Right ventricle myocardium inferior (tissue), 1 donor: ENCODE measurements at regions of chr19 and their contacts with region 1.

Region 1: GRCh38 chr19:11798391-11799330 is at the start of gene ZNF491:
- DNase-seq: peak; percentile 94
- ATAC-seq: peak; percentile 99
- total RNA-seq, gene ZNF491: 2.8 TPM

Region 2: DNA sequence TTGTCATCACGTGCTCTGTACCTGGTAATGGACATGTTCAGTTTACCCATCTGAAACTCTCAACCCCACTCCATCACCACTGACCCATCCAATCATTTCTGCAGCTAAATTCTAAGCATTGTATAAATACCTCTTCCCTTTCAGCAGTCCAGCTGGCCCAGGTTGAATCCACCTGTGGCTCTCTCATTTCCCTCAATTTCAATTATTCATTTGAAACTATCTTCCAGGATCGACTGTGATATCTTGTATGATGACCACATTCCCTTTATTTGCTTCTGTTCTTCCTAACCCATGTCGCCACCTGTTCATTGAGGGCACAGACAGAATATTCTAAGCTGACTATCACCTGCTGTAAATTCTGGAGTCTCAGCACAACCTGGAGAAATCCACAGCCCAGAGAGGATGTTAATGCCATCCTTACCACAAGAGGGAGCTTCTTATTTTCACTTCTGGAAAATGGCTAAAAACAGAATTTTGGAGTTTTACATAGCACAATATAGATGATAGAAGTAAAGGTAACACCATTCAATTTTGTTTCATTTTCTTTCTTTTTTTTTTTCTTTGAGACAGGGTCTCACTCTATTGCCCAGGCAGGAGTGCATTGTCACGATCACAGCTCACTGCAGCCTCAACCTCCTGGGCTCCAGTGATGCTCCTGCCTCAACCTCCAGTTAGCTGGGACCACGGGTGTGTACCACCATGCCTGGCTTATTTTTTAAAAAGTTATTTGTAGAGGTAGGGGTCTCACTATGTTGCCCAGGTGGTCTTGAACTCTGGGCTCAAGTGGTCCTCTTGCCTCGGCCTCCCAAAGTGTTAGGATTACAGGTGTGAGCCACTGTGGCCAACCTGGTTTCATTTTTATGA is 98.5 kb before region 1 on chr19:
- intact Hi-C with region 1: no loop called
- DNase-seq: no peak
- ATAC-seq: no peak

Region 3: DNA sequence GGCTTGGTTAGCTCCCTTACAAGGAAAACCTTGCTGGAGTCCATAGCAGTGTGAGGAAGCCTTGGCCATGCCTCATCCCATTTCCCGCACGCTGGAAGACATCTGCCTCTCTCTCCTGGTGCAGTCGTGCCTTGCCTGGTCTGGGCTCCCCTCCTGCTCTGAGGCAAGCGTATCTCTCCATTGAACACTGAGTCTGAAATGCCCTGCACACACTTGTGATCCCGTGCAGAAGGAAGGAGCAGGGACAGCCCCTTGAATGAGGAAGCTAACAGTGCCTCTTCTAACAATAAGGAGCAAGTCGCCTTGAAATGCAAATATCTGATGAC is 15.0 kb after region 1 on chr19:
- intact Hi-C with region 1: loop called (anchors 2 kb)
- DNase-seq: no peak
- ATAC-seq: peak; percentile 32

Region 4: DNA sequence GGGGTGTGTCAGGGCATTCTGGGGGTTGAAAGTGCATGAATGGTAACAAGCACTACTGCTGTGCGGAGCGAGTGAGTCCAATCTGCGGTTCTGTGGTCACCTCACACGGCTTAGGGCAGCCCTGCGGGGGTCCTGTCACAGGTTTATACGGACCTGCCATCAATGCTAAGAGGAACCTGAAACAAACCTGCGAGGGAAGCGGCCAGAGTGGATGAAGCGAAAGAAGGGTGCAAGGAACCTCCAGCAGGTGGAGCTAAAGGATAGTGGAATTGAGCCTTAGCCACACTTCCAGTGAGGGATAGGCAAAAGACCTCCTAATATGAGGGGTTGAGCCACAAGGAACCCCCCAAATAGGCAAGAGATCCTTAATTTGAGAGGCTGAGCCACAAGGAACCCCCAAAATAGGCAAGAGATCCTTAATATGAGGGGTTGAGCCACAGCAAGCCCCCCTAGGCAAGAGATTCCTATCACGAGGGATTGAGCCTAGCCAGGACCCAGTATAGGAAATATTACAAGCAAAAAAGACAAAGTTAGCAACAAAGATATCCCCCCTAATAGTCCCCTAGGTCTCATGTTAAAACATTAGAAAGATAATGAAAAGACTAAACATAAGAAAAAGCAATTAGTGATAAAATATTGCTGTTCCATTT is 82.6 kb after region 1 on chr19:
- intact Hi-C with region 1: loop called (anchors 5 kb)
- DNase-seq: no peak
- ATAC-seq: peak; percentile 67

Region 5: DNA sequence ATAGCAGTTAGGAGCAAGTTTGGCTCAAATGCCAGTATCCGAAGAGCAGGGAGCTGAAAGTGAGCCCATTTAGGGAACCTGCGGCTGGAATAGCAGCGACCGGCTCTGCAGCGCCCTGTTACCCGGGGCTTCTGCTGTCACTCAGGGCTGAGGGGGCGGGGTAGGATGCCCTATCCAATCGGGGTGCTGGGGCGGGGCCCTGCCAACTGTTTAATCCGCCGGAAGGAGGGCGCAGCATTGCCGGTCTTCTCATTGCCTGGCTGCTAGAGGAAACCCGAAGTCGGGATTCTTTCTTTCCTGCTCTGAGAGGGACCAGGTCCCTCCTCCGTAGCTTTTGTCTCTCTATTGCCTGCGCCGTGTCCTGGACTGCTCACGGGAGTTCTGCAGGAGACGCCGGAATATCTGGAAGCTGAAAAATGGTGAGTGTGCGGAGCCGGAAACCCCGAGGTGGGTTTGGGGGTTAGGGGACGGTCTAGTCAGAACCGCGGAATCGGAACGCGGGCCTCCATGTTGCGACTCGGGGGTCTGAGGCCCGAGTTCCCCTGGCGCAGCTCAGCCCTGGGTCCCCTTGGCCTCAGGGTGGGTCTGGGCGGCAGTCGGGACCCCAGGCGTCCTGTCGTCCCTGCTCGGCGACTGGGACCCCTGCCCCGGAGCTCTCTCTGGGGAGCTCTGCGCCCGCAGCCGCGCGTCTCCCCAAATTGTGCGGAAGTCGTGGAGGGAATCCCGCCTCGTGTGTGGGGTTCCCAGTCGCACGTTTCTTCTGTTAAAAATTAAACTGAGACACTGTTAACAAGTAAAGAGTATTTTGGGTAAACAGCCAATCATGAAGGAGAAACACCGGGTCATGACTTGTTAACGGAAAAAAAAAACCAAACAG is 189.0 kb after region 1 on chr19:
- intact Hi-C with region 1: loop called (anchors 1 kb)
- DNase-seq: peak; percentile 98
- ATAC-seq: peak; percentile 99

Region 6: DNA sequence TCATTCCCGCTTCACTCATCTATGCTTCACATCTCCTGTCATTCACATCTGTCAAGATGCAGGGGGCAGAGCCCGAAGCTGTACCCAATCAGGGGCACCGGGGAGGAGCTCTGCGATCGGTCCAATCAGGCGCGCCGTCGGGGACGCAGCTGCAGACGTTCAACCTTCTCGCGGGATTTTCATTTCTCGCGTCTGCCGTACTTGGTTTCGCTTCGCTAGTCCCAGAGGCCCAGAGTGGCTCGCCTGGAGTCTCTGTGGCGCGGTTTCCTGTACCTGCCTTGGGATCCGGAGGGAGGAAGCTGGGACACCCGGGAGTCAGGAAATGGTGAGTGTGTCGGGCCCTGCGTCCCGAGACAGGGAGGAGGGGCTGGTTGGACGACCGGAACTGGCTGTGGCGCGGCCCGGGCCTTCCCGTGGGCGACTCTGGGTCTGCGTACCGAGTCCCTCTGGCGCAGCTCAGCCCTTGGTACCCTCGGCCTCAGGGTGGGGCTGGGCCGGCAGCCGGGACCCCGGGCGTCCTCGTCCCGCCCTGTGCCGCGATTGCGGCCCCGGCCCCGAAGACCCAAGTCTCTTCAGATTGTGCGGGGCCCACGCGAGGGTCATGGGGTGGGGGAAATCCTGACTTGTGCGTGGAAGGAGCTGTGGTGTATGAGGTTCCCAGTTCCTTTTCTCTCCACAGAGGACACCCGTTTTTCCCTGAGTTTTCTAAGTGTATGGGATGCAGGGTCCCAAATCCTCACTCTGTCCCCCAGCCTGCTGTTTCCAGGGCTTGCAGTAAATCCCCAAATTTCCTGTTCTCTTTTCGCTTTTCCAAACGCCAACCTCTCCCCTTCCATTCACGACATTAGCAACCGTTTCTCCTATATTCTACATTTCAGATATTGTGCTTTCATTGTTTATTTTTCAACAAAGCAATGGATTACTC is 364.5 kb after region 1 on chr19 and contains the start of gene ZNF136:
- intact Hi-C with region 1: no loop called
- DNase-seq: peak; percentile 97
- ATAC-seq: peak; percentile 99
- total RNA-seq, gene ZNF136: 3.8 TPM